CD4-positive, alpha-beta memory T cell (primary cell): ENCODE measurements at regions of chr2 and their contacts with region 1.

Region 1: GRCh38 chr2:113138428-113139322 is 11.3 kb downstream of the IL1RN start:
- DNase-seq: peak; percentile 72 to 81 (median 79)
- H3K4me3 ChIP-seq: peak overlapping the region in 1 of 2 donors; percentile 14
- H3K4me3 Mint-ChIP-seq: peak overlapping the region; percentile 50 to 79 (median 74)
- H3K27ac ChIP-seq: no peak overlapping the region
- H3K27ac Mint-ChIP-seq: peak overlapping the region; percentile 67 to 85 (median 79)
- H3K4me1 ChIP-seq: peaks cover 12% of the 10 kb centered on the region
- H3K4me1 Mint-ChIP-seq: peaks cover 12 to 24% (median 16%) of the 10 kb centered on the region in 4 donors
- H3K27me3 ChIP-seq: no peaks in the 10 kb centered on the region
- H3K27me3 Mint-ChIP-seq: no peaks in the 10 kb centered on the region

Region 2: DNA sequence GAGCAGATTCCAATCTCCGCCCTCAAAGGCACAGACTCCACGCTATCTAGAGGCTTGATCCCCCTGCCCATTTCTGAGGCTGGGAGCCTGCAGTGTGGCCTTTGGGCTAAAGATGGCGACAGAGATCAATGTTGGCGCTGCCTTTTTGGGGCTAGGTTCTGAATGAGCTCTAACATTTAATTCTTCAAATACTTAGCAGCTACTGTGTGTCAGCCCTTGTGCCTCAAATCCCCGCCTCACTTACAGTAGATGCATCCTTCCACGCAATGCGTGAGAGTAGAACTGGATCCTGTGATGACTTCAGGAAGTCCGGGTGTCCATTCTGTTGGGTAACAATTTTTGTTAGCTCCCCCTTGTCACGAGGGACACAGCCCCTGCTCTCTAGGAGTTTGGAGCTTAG is 58.5 kb before region 1 on chr2:
- CTCF ChIA-PET with region 1: interaction called, 11 read pairs
- POLR2A ChIA-PET with region 1: no interaction called
- intact Hi-C with region 1: no loop called
- DNase-seq: peak; percentile 15 to 44 (median 18)
- H3K4me3 ChIP-seq: no peak overlapping the region
- H3K4me3 Mint-ChIP-seq: no peak overlapping the region
- H3K27ac ChIP-seq: no peak overlapping the region
- H3K27ac Mint-ChIP-seq: no peak overlapping the region
- H3K4me1 ChIP-seq: no peaks in the 10 kb centered on the region
- H3K4me1 Mint-ChIP-seq: peaks cover 0 to 2% (median under 1%) of the 10 kb centered on the region in 4 donors
- H3K27me3 ChIP-seq: no peaks in the 10 kb centered on the region
- H3K27me3 Mint-ChIP-seq: peaks cover 4 to 13% of the 10 kb centered on the region in 2 donors

Region 3: GRCh38 chr2:113157118-113157896 is 18.6 kb after region 1 on chr2:
- CTCF ChIA-PET with region 1: interaction called, 94 read pairs
- POLR2A ChIA-PET with region 1: interaction called, 9 read pairs
- intact Hi-C with region 1: loop called (anchors 1 kb)
- DNase-seq: peak in 4 of 5 donors; percentile 39 to 57 (median 50)
- H3K4me3 ChIP-seq: peak overlapping the region; percentile 57 to 74
- H3K4me3 Mint-ChIP-seq: peak overlapping the region; percentile 85 to 95 (median 88)
- H3K27ac ChIP-seq: peak overlapping the region; percentile 55
- H3K27ac Mint-ChIP-seq: peak overlapping the region; percentile 57 to 88 (median 74)
- H3K4me1 ChIP-seq: peaks cover 27% of the 10 kb centered on the region
- H3K4me1 Mint-ChIP-seq: peaks cover 13 to 28% (median 23%) of the 10 kb centered on the region in 4 donors
- H3K27me3 ChIP-seq: no peaks in the 10 kb centered on the region
- H3K27me3 Mint-ChIP-seq: no peaks in the 10 kb centered on the region

Region 4: DNA sequence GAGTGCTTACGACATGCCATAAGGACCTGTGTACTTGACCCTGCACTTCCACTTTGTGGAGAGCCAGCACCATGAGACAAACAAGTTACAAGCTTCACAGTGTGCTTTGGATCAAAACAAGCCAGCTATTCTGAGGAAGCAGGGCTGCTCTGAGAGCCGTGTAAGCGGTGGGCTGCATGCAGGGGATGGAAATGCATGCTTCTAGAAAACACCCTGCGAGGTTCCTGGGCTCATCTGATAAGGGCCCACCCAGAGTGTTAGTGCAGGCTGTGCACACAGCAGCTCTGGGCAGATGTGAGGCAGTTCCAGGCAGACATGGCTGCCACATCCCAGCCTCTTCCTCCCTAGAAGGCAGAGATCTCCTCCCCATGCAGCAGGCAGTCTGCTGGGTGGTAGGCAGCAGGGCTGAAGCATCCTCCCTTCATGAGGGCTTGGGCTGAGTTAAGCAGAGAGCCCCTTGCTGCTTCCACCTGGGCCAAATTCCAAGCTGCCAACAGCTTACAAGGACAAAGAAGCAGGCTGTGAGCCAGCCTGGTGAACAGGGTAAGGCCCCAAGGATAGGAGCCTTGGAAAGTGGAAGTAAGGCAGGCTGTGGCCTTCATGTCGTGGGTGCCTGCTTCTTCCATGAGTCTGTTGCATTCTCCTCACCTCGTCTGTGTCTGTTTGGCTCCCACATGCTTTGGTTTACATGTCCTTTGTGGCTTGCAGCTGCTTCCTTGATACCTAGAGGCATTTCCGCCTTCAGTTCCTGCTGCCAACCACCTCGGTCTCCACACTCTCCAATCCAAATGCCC is 42.8 kb after region 1 on chr2:
- CTCF ChIA-PET with region 1: interaction called, 150 read pairs
- POLR2A ChIA-PET with region 1: interaction called, 56 read pairs
- intact Hi-C with region 1: no loop called
- DNase-seq: peak in 3 of 5 donors; percentile 27 to 36 (median 29)
- H3K4me3 ChIP-seq: peak overlapping the region in 1 of 2 donors; percentile 7
- H3K4me3 Mint-ChIP-seq: peak overlapping the region; percentile 61 to 93 (median 70)
- H3K27ac ChIP-seq: peak overlapping the region; percentile 27
- H3K27ac Mint-ChIP-seq: peak overlapping the region; percentile 86 to 94 (median 91)
- H3K4me1 ChIP-seq: peaks cover 100% of the 10 kb centered on the region
- H3K4me1 Mint-ChIP-seq: peaks cover 69 to 99% (median 90%) of the 10 kb centered on the region in 4 donors
- H3K27me3 ChIP-seq: no peaks in the 10 kb centered on the region
- H3K27me3 Mint-ChIP-seq: no peaks in the 10 kb centered on the region

Region 5: GRCh38 chr2:113218283-113219091 is 79.8 kb after region 1 on chr2:
- CTCF ChIA-PET with region 1: interaction called, 17 read pairs
- POLR2A ChIA-PET with region 1: interaction called, 3 read pairs
- intact Hi-C with region 1: no loop called
- DNase-seq: no peak
- H3K4me3 ChIP-seq: no peak overlapping the region
- H3K4me3 Mint-ChIP-seq: peak overlapping the region in 1 of 8 donors; percentile 4
- H3K27ac ChIP-seq: no peak overlapping the region
- H3K27ac Mint-ChIP-seq: peak overlapping the region in 1 of 7 donors; percentile 15
- H3K4me1 ChIP-seq: peaks cover 10% of the 10 kb centered on the region
- H3K4me1 Mint-ChIP-seq: peaks cover 9 to 18% (median 12%) of the 10 kb centered on the region in 4 donors
- H3K27me3 ChIP-seq: no peaks in the 10 kb centered on the region
- H3K27me3 Mint-ChIP-seq: no peaks in the 10 kb centered on the region

Region 6: GRCh38 chr2:113257516-113258264 is 119.0 kb after region 1 on chr2:
- CTCF ChIA-PET with region 1: interaction called, 14 read pairs
- POLR2A ChIA-PET with region 1: no interaction called
- intact Hi-C with region 1: no loop called
- DNase-seq: no peak
- H3K4me3 ChIP-seq: no peak overlapping the region
- H3K4me3 Mint-ChIP-seq: no peak overlapping the region
- H3K27ac ChIP-seq: no peak overlapping the region
- H3K27ac Mint-ChIP-seq: peak overlapping the region in 2 of 7 donors; percentile 40 to 54
- H3K4me1 ChIP-seq: peaks cover 38% of the 10 kb centered on the region
- H3K4me1 Mint-ChIP-seq: peaks cover 33 to 53% (median 42%) of the 10 kb centered on the region in 4 donors
- H3K27me3 ChIP-seq: no peaks in the 10 kb centered on the region
- H3K27me3 Mint-ChIP-seq: no peaks in the 10 kb centered on the region